ENCODE measurements at regions of chr3 and their contacts with region 1.

Region 1: DNA sequence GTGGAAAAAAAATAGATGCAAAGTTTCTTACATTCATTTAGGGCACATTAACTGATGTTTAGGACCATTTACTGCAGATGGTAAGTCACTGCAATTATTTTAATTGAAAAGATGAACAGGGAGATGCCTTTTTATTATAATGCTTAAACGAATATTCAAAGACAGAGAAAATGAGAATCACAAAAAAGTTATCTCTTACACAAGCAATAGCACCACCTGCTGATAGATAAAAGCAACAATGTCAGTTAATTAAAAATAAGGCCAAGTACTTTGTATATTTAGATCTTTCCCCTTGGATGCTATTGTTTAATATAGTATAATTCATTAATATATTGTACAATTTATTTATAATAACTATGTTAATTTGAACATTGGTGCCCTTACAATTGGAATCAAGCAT is 55.9 kb downstream of the IFT80 start:
- DNase-seq: no peak
- H3K4me3 Mint-ChIP-seq: no peak overlapping the region
- H3K27ac Mint-ChIP-seq: no peak overlapping the region
- H3K4me1 Mint-ChIP-seq: no peaks in the 10 kb centered on the region
- H3K27me3 Mint-ChIP-seq: no peaks in the 10 kb centered on the region

Region 2: DNA sequence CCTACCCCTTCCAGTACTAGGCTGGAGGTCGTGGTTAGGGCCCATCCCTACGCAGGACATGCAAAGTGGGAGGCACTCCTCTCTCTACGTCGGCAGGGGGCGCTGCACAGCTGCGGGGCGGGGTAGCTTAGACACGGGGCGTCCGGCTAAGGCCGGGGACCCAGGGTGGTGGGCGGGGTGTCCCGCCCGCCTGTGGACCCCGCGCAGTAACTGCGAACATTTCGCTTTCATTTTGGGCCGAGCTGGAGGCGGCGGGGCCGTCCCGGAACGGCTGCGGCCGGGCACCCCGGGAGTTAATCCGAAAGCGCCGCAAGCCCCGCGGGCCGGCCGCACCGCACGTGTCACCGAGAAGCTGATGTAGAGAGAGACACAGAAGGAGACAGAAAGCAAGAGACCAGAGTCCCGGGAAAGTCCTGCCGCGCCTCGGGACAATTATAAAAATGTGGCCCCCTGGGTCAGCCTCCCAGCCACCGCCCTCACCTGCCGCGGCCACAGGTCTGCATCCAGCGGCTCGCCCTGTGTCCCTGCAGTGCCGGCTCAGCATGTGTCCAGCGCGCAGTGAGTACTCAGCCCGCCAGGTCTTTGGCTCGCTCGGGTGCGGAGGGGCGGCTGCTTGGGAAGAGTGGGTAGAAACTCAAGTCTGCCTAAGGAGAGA is 354.4 kb before region 1 on chr3 and contains the start of gene IL12A:
- CTCF ChIA-PET with region 1: interaction called, 4 read pairs
- POLR2A ChIA-PET with region 1: no interaction called
- intact Hi-C with region 1: loop called (anchors 2 kb)
- DNase-seq: peak; percentile 87
- H3K4me3 Mint-ChIP-seq: peak within 1 kb of the TSS; percentile 62
- H3K27ac Mint-ChIP-seq: no peak within 1 kb of the TSS
- H3K4me1 Mint-ChIP-seq: peaks cover 17% of the 10 kb centered on the region
- H3K27me3 Mint-ChIP-seq: no peaks in the 10 kb centered on the region
- total RNA-seq, gene IL12A: not detected

Region 3: DNA sequence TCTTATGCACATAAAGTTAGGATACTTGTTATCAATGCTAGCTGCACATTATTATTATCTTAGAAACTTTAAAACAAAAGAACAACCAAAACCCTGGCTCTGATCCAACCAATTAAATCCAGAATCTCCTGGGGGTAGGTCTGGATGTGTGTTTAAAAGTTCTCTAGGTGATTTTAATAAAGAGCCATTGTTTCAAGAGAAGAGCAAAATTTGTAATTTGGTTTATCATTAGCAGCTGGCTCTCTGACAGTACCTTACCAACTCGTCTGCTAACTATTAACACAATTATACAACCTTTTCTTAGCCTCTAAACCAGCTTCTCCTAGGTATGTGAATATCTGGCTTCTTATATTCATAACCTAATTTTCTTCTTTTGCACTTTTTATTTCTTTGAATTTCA is 13.0 kb before region 1 on chr3:
- CTCF ChIA-PET with region 1: no interaction called
- POLR2A ChIA-PET with region 1: no interaction called
- intact Hi-C with region 1: no loop called
- DNase-seq: no peak
- H3K4me3 Mint-ChIP-seq: no peak overlapping the region
- H3K27ac Mint-ChIP-seq: no peak overlapping the region
- H3K4me1 Mint-ChIP-seq: no peaks in the 10 kb centered on the region
- H3K27me3 Mint-ChIP-seq: no peaks in the 10 kb centered on the region

Region 4: GRCh38 chr3:160390565-160391138 is 47.5 kb after region 1 on chr3:
- CTCF ChIA-PET with region 1: no interaction called
- POLR2A ChIA-PET with region 1: no interaction called
- intact Hi-C with region 1: no loop called
- DNase-seq: no peak
- H3K4me3 Mint-ChIP-seq: no peak overlapping the region
- H3K27ac Mint-ChIP-seq: no peak overlapping the region
- H3K4me1 Mint-ChIP-seq: peaks cover 2% of the 10 kb centered on the region
- H3K27me3 Mint-ChIP-seq: no peaks in the 10 kb centered on the region

Measured in activated CD4-positive, alpha-beta memory T cell treated with anti-CD3 and anti-CD28 coated beads for 36 hours (primary cell).